ENCODE measurements at regions of chr9 and their contacts with region 1.

Region 1: DNA sequence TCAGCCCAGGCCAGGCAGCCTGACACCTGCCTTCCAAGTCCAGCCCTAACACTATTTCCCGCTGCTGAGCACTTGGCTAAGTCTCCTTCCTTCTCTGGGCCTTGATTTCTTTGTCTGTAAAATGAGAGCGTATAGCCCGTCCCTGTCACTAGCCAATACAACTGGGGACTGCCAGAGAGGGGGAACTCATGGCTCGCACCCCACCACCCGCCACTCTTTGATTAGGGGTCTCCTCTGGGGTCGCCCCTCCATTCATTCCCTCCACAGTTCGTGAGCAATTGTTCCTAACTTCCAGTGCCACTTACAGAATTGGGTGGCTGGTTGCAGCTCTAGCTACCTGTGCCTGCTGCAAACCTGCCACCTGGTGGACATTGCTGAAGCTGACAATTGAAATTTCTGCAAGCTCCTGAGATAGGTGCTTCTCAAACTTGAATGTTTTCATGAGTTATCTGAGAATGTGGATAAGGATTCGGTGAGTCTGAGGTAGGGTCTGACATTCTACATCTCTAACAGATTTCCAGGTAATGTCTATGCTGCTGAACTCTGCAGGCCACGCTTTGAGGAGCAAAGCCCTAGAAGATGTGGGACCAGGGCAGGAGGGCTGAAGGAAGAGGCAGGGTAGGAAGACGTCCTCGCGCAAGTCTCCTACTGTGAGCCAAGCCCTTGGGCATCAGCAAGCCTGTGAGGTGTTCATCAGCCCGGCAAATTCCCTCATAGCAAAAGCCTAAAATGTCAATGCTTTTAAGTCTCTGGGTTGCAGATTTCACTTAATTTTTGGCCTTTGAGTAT is 13.3 kb upstream of the RECK start:
- DNase-seq: peak; percentile 52
- H3K4me3 Mint-ChIP-seq: no peak overlapping the region
- H3K27ac Mint-ChIP-seq: no peak overlapping the region
- H3K4me1 Mint-ChIP-seq: no peaks in the 10 kb centered on the region
- H3K27me3 Mint-ChIP-seq: peaks cover 13% of the 10 kb centered on the region

Region 2: DNA sequence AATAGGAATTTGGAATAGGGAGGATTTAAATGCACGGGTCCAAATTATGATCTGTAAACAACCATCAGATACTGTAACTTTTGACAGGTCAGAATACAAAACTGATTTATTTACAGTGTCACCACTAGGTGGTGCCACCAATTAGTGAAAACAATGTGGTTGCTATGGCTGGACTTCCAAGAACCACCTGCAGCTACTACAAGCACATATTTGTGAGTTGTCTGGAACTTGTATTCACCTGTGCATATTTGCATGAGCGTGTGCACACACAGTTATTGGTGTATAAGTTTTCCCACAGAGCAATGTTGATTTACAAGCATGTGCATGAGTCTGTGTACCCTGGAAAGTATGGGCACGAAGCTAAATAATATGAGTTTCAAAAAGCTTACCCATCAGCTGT is 120.4 kb before region 1 on chr9:
- intact Hi-C with region 1: loop called (anchors 5 kb)
- DNase-seq: no peak
- H3K4me3 Mint-ChIP-seq: no peak overlapping the region
- H3K27ac Mint-ChIP-seq: no peak overlapping the region
- H3K4me1 Mint-ChIP-seq: peaks cover 12% of the 10 kb centered on the region
- H3K27me3 Mint-ChIP-seq: peaks cover 22% of the 10 kb centered on the region

Region 3: GRCh38 chr9:35954942-35955546 is 68.4 kb before region 1 on chr9:
- intact Hi-C with region 1: loop called (anchors 1 kb)
- DNase-seq: peak; percentile 26
- H3K4me3 Mint-ChIP-seq: no peak overlapping the region
- H3K27ac Mint-ChIP-seq: no peak overlapping the region
- H3K4me1 Mint-ChIP-seq: no peaks in the 10 kb centered on the region
- H3K27me3 Mint-ChIP-seq: peaks cover 37% of the 10 kb centered on the region

Measured in activated T-helper 2 cell treated with anti-CD3 and anti-CD28 coated beads, Interferon-gamma antibody, Interleukin-2, Interleukin-4, amounts not matched to agents 10 μg/mL and 5 μg/mL and 100 μg/mL, durations not matched to agents 14 hours and 24 hours and 36 hours (primary cell).